ENCODE measurements at regions of chr4 and their contacts with region 1.

Region 1: GRCh38 chr4:128454281-128455075 is 166.9 kb upstream of the PGRMC2 start:
- DNase-seq: peak; percentile 87 to 93
- H3K4me3 ChIP-seq: no peak overlapping the region
- H3K27ac ChIP-seq: peak overlapping the region; percentile 62 to 63
- H3K4me1 ChIP-seq: no peaks in the 10 kb centered on the region
- H3K27me3 ChIP-seq: no peaks in the 10 kb centered on the region
- CTCF ChIP-seq: peak; percentile 78 to 87 (median 83)
- POLR2A ChIP-seq: no peak

Region 2: DNA sequence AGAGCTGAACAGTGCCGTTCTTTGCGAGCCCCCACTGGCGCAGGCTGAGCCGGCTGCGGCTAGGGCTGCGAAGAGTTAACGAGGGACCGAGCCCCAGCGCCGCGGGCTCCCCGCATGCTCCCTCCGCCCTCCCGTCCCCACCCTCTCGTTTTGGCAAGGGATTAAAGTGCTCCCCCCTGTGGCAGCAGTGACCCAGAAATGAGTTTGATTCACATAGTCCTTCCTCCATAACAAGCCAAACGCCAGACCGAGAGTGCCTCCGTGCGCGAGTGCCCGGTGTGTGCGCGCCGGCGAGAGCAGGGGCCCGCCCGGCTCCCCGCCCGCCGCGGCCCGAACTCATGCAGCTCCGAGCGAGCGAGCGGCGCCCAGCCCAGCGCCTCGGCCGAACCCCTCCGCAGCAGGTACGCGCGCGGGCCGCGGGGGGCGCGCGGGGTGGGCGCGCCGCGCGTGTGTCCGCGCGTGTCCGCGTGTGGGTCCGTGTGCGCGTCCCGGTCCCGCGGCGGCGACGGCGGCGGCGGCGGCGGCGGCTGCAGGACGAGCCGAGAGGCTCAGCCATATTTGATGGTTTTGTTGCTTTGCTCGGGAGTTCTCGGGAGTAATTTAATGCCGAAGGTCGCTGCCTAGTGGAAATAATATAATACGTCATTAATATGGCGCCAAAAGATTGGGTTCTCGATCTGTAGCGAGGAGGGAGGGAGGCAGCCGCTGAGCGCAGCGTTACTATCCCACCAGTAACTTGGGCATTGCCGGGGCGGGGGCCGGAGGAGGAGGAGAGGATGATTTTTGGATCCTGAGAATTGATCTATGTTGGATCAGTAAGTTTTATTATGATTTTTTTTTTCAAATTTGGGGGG is 355.2 kb after region 1 on chr4 and contains the start of gene JADE1:
- intact Hi-C with region 1: loop called (anchors 5 kb)
- DNase-seq: peak; percentile 88 to 91
- H3K4me3 ChIP-seq: peak within 1 kb of the TSS; percentile 93 to 96
- H3K27ac ChIP-seq: peak within 1 kb of the TSS; percentile 94 to 96
- H3K4me1 ChIP-seq: no peaks in the 10 kb centered on the region
- H3K27me3 ChIP-seq: no peaks in the 10 kb centered on the region
- CTCF ChIP-seq: peak; percentile 57 to 66 (median 60)
- POLR2A ChIP-seq: peak; percentile 52 to 63
- total RNA-seq, gene JADE1: 18.7 to 50.2 (median 35.7) TPM

Measured in uterus (tissue), 4 donors.